ENCODE measurements at regions of chr20 and their contacts with region 1.

Region 1: DNA sequence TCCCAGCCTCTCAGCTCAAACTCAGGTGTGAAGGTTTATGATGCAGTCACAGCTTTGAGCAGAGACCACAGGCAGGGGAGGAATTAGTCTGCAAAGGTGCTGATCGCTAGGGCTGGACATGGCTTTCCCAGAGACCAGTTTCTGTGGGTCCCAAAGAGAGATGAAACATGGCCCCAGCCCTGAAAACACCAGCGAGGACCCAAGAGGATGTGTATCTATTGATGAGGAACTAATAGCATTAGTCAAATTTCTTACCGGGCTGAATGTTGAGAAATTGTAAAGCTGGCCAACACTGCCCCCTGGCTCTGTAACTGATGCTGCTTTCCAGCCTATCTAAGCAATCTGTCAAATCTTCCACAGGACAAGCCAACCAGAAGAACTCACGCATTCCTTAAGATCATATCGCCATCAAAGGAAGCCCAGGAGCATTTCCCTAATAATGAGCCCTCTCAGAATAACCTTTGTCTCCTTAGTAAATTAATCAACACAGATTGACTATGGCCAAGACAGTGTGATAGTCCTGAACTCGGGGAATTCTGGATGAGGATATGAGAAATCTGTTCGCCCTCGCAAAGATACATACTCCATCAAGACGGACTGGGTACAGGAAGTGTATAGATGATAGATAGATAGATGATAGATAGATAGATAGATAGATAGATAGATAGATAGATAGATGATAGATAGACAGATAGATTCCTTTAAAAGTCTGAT is 7.8 kb upstream of the ACSS1 start:
- DNase-seq: peak; percentile 65
- H3K27ac ChIP-seq: no peak overlapping the region
- CTCF ChIP-seq: peak; percentile 83

Region 2: GRCh38 chr20:24992487-24993205 is 73.1 kb before region 1 on chr20 and contains the start of gene APMAP:
- CTCF ChIA-PET with region 1: interaction called, 53 read pairs
- POLR2A ChIA-PET with region 1: interaction called, 3 read pairs
- DNase-seq: peak; percentile 96
- H3K27ac ChIP-seq: peak within 1 kb of the TSS; percentile 78
- CTCF ChIP-seq: no peak